Activated T-helper 2 cell treated with anti-CD3 and anti-CD28 coated beads, Interferon-gamma antibody, Interleukin-2, Interleukin-4, amounts not matched to agents 10 μg/mL and 5 μg/mL and 100 μg/mL, durations not matched to agents 14 hours and 24 hours and 36 hours (primary cell): ENCODE measurements at regions of chr16 and their contacts with region 1.

Region 1: DNA sequence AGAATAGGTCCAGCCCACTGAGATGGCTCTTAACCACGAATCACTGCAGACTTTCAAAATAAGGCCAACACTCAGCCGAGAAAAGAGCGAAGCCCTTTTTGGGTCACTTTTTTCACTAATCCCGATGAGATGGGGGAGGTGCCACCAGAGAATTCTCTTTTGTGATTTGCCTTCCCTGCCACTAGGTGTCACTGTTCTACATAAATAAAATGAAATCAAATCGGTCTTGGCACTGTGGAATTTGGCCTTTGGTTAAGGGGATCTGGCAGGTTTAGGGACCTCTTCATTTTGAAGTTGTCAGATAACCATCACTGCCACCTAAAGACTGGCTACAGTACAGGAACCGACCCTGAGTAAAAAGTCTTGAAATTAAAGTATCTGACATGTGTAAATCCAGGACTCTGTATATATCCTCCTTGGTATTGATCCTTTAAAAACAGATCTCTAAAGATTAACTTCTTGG is 147.0 kb downstream of the HS3ST4 start:
- DNase-seq: peak; percentile 9
- H3K4me3 Mint-ChIP-seq: no peak overlapping the region
- H3K27ac Mint-ChIP-seq: no peak overlapping the region
- H3K4me1 Mint-ChIP-seq: no peaks in the 10 kb centered on the region
- H3K27me3 Mint-ChIP-seq: peaks cover under 1% of the 10 kb centered on the region

Region 2: DNA sequence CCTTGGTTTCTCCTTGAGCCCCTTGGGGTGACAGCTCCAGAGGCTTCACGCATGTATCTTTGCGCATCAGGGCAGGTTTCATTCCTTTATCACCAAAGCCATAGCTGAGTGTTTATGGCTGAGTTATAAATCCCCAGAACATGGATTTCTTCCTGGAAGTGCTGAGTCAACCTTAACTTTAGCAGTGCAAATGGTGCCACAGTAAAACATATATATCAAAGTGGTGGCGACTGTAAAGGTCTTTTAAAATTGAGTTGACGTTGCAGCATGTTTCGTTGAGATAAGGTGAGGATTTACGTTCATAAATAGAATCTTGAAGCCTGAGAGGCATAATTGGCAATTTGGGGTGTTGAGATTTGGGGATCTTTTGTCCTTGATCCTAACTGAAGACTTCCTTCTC is 67.1 kb after region 1 on chr16:
- intact Hi-C with region 1: no loop called
- DNase-seq: no peak
- H3K4me3 Mint-ChIP-seq: no peak overlapping the region
- H3K27ac Mint-ChIP-seq: no peak overlapping the region
- H3K4me1 Mint-ChIP-seq: no peaks in the 10 kb centered on the region
- H3K27me3 Mint-ChIP-seq: no peaks in the 10 kb centered on the region

Region 3: DNA sequence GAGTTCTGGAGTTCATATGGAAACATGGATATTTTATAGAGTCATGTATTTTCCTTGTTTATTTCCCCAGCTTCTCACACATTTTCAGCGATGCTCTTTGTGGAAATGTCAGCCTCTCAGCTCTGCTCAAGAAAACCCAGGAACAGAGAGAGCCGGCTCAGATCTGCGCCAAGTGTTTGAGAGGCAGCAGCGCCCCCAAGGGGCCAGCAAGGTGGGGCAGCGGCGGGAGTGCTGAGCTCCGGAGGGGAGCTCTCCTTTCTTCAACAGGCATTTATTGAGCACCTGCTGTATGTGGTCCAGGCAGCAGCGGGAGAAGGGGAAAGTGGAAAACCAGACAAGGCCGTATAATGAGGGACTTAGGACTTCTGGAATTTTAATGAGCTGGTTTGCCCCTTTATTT is 806.9 kb after region 1 on chr16:
- intact Hi-C with region 1: loop called (anchors 2 kb)
- DNase-seq: peak; percentile 45
- H3K4me3 Mint-ChIP-seq: no peak overlapping the region
- H3K27ac Mint-ChIP-seq: no peak overlapping the region
- H3K4me1 Mint-ChIP-seq: peaks cover 28% of the 10 kb centered on the region
- H3K27me3 Mint-ChIP-seq: no peaks in the 10 kb centered on the region

Region 4: DNA sequence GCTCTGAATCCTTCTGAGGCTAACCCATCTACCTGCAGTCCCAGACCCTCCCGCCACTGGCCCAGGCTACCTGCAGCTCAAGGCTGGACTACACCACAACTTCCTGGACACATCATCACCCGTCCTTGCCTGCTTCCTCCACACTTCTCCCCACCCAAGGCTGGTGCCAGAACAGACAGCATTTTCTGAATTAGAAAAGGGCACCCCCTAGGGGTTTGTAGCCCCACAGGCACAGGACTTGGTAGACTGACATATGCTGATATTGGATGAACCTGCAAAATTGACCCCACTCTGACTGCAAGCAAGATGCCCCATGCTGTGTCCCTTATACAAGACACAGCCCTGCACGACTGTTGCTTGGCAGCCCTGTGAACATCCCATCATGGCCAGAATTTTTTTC is 956.4 kb after region 1 on chr16:
- intact Hi-C with region 1: loop called (anchors 5 kb)
- DNase-seq: peak; percentile 22
- H3K4me3 Mint-ChIP-seq: no peak overlapping the region
- H3K27ac Mint-ChIP-seq: no peak overlapping the region
- H3K4me1 Mint-ChIP-seq: peaks cover 7% of the 10 kb centered on the region
- H3K27me3 Mint-ChIP-seq: peaks cover 9% of the 10 kb centered on the region

Region 5: DNA sequence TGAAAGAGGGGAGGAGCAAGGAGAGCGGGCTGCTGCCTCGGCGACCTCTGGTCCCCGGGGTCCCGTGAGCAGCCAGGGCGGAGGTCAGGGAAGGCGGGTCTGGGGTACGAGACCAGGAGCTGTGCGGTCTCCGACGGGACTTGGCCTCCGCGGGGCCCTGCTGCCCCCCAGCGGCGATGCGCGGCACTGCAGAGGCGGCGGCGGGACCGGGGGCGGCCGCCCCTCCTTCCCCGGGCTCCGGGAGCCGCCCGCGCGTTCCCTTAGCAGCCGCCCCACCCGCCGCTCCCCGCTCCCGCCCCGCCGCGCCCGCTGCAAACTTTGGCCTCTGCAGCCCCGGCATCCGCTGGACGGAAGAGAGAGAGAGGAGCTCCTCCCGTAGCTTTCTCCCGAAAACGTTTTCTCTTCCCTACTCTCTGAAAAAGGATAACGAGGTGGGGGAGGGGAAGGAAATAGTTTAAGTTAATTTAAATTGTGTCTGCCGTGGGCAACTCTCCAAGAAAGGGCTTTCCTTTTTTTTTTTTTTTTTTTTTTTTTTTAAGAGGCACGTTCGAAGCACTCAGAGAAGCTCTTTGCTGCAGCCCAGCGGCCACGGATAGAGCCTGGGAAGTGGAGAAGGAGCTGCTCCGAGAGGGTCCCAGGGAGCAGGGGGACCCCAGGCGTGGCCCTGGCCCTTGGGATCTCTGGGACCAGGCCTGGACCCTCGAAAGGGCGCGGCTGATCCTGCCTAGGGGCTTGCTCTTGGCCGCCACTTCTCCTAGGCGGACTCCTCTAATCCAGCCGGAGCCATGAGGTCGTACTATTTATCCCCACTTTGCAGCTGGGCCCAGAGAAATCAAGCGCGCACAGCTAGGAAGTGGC is 1271.1 kb after region 1 on chr16:
- intact Hi-C with region 1: loop called (anchors 5 kb)
- DNase-seq: peak; percentile 71
- H3K4me3 Mint-ChIP-seq: peak overlapping the region; percentile 69
- H3K27ac Mint-ChIP-seq: no peak overlapping the region
- H3K4me1 Mint-ChIP-seq: peaks cover 4% of the 10 kb centered on the region
- H3K27me3 Mint-ChIP-seq: peaks cover 10% of the 10 kb centered on the region